Gastrocnemius medialis (tissue), 4 donors: ENCODE measurements at regions of chr16 and their contacts with region 1.

Region 1: GRCh38 chr16:4846891-4847773 is at the starts of genes GLYR1 and UBN1:
- DNase-seq: peak; percentile 99
- ATAC-seq: peak; percentile 90 to 91
- H3K4me3 ChIP-seq: peak within 1 kb of the TSS; percentile 80 to 98 (median 94)
- H3K27ac ChIP-seq: peak within 1 kb of the TSS; percentile 96 to 99 (median 99)
- H3K4me1 ChIP-seq: peaks cover 50 to 54% of the 10 kb centered on the region in 2 donors
- H3K27me3 ChIP-seq: no peaks in the 10 kb centered on the region
- CTCF ChIP-seq: no peak
- POLR2A ChIP-seq: peak; percentile 95 to 96
- total RNA-seq, gene GLYR1: 39.4 to 56.7 (median 53.0) TPM
- total RNA-seq, gene UBN1: 25.3 to 33.4 (median 28.2) TPM

Region 2: GRCh38 chr16:4802659-4803287 is 44.4 kb before region 1 on chr16:
- in situ Hi-C with region 1: no loop called
- intact Hi-C with region 1: loop called (anchors 5 kb)
- DNase-seq: peak; percentile 91 to 93
- ATAC-seq: peak; percentile 95
- H3K4me3 ChIP-seq: peak overlapping the region; percentile 64 to 97 (median 84)
- H3K27ac ChIP-seq: peak overlapping the region; percentile 76 to 93 (median 86)
- H3K4me1 ChIP-seq: peaks cover 11 to 17% of the 10 kb centered on the region in 2 donors
- H3K27me3 ChIP-seq: no peaks in the 10 kb centered on the region
- CTCF ChIP-seq: peak in 4 of 5 experiments; percentile 32 to 60 (median 42)
- POLR2A ChIP-seq: peak; percentile 1 to 20

Region 3: GRCh38 chr16:4879049-4879448 is 31.9 kb after region 1 on chr16:
- in situ Hi-C with region 1: no loop called
- intact Hi-C with region 1: no loop called
- DNase-seq: no peak
- ATAC-seq: no peak
- H3K4me3 ChIP-seq: no peak overlapping the region
- H3K27ac ChIP-seq: no peak overlapping the region
- H3K4me1 ChIP-seq: peaks cover 0 to 11% of the 10 kb centered on the region in 2 donors
- H3K27me3 ChIP-seq: no peaks in the 10 kb centered on the region
- CTCF ChIP-seq: no peak
- POLR2A ChIP-seq: no peak

Region 4: DNA sequence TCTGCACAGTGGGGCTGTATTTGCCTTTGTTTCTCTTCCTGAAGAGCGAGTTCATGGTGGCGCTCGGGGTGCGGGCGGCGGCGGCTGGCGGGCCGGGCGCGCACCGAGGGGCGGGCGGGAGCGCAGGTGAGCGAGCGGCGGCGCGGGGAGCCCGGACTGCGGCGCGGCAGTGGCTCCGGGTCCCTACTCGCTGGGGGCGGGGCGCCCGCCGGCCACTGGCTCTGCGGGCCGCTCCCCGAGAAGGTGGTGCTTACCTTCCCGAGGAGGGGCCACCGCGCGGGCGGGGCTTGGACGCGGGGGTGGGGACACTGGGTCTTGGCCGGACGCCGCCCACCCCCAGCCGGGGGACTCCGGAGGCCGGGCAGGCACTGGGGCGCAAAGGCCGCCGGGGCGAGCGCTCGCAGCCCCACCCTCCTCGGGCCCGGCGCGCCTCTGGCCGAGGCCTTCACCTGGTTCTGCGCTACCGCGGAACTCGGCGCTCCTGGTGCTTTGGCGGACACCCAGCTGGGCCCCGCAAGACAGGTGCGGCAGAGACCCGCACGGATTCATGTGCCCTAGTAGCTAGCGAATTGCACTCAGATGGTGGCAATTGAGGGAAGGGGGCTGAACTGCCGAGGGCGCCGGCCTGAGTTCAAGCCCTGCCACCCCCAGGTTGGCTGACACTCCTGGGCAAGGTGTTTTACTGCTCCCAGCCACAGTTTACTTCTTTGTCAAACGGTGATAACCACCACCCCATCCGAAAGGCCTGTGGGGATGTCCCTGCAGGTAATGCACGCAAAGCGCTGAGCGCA is 90.1 kb after region 1 on chr16 and contains the start of gene PPL:
- in situ Hi-C with region 1: no loop called
- intact Hi-C with region 1: loop called (anchors 5 kb)
- DNase-seq: peak; percentile 32 to 67
- ATAC-seq: peak in 1 of 2 donors; percentile 26
- H3K4me3 ChIP-seq: peak within 1 kb of the TSS; percentile 54 to 71 (median 61)
- H3K27ac ChIP-seq: peak within 1 kb of the TSS; percentile 34 to 75 (median 71)
- H3K4me1 ChIP-seq: peaks cover 16 to 21% of the 10 kb centered on the region in 2 donors
- H3K27me3 ChIP-seq: peaks cover 0 to 10% (median 7%) of the 10 kb centered on the region in 3 donors
- CTCF ChIP-seq: no peak
- POLR2A ChIP-seq: peak in 1 of 2 donors; percentile 24
- total RNA-seq, gene PPL: 12.8 to 23.1 (median 18.3) TPM